ENCODE measurements at regions of chr6 and their contacts with region 1.

Region 1: DNA sequence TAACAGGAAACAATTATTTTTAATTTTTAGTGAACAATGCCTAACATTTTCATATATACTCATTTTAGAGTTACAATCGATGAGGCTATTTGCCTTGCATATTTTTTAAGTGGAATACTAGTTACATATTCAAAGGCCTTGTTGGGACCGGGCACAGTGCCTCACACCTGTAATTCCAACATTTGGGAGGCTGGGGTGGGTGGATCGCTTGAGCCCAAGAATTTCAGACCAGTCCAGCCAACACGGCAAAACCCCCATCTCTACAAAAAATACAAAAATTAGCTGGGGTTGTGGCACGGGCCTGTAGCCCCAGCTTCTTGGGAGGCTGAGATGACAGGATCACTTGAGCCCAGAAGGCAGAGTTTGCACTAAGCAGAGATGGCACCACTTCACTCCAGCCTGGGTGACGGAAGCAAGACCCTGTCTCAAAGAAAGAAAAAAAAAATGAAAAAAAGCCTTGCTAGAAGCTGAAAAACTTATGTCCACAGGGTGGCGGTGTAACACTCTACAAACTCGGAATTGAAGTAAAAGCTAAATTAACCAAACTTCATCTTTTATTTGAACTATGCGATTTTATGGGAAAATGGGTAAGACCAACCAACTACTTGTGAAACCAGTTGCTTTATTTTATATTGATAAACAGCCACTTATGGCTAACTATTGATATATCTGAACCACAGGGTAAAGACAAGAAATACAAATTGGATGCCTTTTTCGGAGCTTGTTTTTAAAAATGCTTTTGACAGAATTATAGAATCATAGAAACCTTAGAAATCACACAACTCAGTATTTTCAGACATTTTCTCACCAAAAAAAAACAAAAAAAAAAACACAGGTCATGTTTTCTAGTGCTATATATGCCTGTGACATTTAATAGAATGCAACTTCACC is 24.1 kb upstream of the ROS1 start:
- DNase-seq: peak in 5 of 10 donors; percentile 9 to 42 (median 30)

Region 2: DNA sequence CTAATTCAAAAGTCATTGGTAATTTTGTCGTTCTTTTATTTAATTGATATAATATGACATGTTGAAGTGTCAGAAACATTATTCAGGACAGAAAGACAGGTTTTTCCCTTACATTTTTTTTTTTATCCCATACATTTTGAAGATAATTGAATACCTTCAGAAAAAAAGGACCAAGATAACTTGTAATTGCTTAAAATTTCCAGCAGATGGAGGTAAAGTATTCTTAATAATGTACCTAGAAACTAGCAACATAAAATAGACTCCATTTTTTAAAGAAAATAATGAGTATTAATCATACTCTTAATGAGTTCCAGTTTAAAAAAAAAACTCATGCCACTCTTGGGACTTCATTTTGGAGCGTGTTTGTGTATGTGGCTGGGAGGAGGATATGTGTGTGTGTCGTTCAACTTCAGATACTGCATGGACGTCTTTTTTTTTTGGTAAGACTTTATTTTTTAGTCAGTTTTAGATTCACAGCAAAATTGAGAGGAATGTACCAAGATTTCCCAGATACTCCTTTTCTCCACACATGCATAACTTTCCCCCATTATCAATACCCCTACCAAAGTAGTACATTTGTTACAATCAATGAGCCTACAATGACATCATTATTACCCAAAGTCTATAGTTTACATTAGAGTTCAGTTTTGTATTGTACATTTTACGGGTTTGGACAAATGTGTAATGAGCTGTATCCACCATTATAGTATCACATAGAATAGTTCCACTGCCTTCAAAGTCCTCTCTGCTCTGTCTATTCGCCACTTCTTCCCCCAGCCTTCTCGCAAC is 103.5 kb before region 1 on chr6:
- intact Hi-C with region 1: loop called (anchors 10 kb)
- DNase-seq: no peak

Region 3: DNA sequence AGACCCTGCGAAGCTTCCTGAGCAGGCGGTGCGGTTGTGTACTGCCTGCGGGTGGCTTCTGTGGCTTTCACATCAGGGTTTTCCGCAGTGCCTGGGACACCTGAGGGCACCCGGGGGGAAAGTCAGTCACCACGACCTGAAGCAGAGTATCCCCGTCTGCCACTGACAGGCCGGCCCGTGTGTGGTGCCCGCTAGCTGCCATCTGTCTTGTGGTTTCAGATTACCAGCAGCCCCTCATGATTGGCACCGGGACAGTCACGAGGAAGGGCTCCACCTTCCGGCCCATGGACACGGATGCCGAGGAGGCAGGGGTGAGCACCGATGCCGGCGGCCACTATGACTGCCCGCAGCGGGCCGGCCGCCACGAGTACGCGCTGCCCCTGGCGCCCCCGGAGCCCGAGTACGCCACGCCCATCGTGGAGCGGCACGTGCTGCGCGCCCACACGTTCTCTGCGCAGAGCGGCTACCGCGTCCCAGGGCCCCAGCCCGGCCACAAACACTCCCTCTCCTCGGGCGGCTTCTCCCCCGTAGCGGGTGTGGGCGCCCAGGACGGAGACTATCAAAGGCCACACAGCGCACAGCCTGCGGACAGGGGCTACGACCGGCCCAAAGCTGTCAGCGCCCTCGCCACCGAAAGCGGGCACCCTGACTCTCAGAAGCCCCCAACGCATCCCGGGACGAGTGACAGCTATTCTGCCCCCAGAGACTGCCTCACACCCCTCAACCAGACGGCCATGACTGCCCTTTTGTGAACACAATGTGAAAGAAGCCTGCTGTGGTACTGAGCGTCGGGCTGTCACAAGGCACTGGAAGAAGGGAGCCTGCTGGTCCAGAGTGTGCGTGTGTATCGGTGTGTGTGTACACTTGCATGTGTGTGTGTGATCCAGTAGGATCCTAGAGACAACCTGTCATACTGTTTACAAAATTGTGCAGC is 98.2 kb after region 1 on chr6:
- intact Hi-C with region 1: loop called (anchors 2 kb)
- DNase-seq: peak; percentile 29 to 94 (median 62)

Region 4: DNA sequence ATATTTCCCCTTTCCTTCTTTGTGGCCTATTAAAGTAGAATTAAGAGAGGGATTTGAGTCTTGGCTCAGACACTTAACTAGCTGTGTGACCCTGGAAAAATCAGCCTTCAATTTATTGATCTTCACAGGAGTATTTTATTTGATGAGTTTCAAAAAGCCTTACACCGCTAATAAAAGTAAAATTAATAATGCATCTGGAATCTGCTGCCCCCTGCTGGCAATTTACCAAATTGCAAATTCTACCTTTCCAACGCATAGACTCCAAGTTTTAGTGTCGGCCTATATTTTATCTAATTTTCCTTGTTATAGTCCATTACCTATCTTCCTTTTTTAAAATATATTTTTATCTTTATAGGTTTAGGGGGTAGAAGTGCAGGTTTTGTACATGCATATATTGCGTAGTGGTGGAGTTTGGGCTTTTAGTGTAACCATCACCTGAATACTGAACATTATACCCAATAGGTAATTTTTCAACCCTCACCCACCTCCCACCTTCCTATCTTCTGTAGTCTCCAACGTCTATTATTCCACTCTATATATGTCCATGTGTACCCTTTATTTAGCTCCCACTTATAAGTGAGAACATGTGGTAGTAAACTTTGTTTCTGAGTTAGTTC is 106.2 kb after region 1 on chr6:
- intact Hi-C with region 1: loop called (anchors 1 kb)
- DNase-seq: peak in 3 of 10 donors; percentile 38 to 53 (median 48)

Region 5: GRCh38 chr6:117602151-117602898 is 152.5 kb after region 1 on chr6 and contains the start of gene GOPC:
- intact Hi-C with region 1: loop called (anchors 2 kb)
- DNase-seq: peak; percentile 94 to 99 (median 96)

Region 6: GRCh38 chr6:117829594-117830319 is 380.0 kb after region 1 on chr6:
- intact Hi-C with region 1: loop called (anchors 10 kb)
- DNase-seq: peak in 3 of 10 donors; percentile 61 to 79 (median 74)